Activated T-helper 1 cell treated with anti-CD3 and anti-CD28 coated beads, Interleukin-12 subunit alpha, Interleukin-12 subunit beta, Interleukin-2, Interleukin-4 antibody, amounts not matched to agents 30 ng/mL and 10 ng/mL and 1 ng/mL, durations not matched to agents 14 hours and 24 hours and 36 hours (primary cell): ENCODE measurements at regions of chr2 and their contacts with region 1.

Region 1: GRCh38 chr2:11829947-11830707 is 83.7 kb downstream of the LPIN1 start:
- DNase-seq: peak; percentile 59
- H3K4me3 Mint-ChIP-seq: peak overlapping the region; percentile 76
- H3K27ac Mint-ChIP-seq: peak overlapping the region; percentile 75
- H3K4me1 Mint-ChIP-seq: peaks cover 44% of the 10 kb centered on the region
- H3K27me3 Mint-ChIP-seq: peaks cover 37% of the 10 kb centered on the region

Region 2: GRCh38 chr2:11753886-11754699 is 76.0 kb before region 1 on chr2:
- intact Hi-C with region 1: loop called (anchors 1 kb)
- DNase-seq: peak; percentile 57
- H3K4me3 Mint-ChIP-seq: peak overlapping the region; percentile 69
- H3K27ac Mint-ChIP-seq: peak overlapping the region; percentile 82
- H3K4me1 Mint-ChIP-seq: peaks cover 85% of the 10 kb centered on the region
- H3K27me3 Mint-ChIP-seq: no peaks in the 10 kb centered on the region

Region 3: GRCh38 chr2:11807156-11807555 is 23.0 kb before region 1 on chr2:
- intact Hi-C with region 1: no loop called
- DNase-seq: no peak
- H3K4me3 Mint-ChIP-seq: no peak overlapping the region
- H3K27ac Mint-ChIP-seq: no peak overlapping the region
- H3K4me1 Mint-ChIP-seq: peaks cover 6% of the 10 kb centered on the region
- H3K27me3 Mint-ChIP-seq: no peaks in the 10 kb centered on the region

Region 4: DNA sequence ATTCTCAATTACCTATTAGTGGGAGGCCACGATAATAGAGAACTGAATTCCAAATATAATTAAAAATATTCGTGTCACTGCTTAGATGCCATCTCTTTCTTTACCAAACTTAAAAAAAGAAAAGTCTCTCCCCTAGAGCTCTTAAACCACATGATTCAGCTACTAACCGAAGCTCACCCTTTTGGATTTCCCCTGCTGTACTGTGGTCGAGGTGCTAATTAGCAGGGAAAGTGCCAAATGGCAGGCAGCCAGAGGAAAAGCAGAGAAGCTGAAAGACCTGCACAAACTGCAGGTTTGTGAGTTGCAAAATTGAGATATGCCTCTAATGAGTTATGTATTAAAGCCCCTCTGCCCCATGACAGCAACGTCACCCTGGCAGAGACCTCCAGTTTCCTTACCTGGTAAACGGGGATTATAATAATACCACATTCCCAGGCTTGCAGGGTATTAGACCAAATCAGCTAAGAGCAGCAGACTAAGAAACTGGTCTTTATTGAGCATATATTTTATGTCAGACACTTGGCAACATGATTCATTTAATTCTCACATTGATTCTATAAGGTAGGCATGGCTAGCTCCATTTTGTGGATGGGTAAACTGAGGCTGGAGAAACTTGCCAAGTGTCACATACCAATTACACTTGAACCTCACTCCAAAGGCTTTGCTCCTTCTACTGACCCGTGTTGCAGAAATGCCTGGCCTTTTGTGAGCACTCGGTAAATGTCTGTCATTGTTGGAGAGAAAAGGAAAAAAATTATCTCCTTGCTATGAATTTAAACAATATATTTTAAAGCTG is 176.0 kb after region 1 on chr2:
- intact Hi-C with region 1: loop called (anchors 1 kb)
- DNase-seq: peak; percentile 45
- H3K4me3 Mint-ChIP-seq: no peak overlapping the region
- H3K27ac Mint-ChIP-seq: no peak overlapping the region
- H3K4me1 Mint-ChIP-seq: peaks cover 7% of the 10 kb centered on the region
- H3K27me3 Mint-ChIP-seq: peaks cover 58% of the 10 kb centered on the region

Region 5: DNA sequence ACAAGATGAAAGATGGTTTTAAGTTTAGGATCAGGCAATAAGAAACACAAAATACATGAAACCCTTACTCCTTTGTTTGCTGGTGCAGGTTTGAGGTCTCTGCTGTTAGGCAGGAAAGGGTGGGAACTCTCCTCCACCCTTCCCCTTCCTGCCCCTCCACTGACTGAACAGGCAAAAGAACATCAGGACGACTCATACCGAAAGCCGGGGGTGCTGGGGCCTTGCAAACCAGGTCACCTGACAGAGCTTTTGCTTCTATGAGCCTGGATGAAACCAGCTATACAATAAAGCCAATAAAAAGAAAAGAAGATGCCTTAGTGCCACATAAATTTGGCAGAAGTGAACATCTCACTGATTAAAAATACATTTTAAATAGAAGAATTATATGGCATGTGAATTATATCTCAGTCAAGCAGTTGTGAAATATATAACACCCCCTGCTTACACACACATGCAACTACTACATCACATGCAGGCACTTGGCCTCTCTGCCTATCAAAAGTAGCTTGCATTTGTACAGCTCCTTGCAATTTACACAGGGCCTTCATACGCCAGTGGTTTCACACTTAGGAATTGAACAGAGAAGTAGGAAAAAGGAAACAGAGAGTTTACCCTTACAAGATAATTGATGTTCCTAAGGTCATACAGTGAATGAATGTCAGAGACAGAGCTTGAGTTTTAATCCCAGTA is 671.5 kb after region 1 on chr2:
- intact Hi-C with region 1: loop called (anchors 1 kb)
- DNase-seq: peak; percentile 79
- H3K4me3 Mint-ChIP-seq: peak overlapping the region; percentile 34
- H3K27ac Mint-ChIP-seq: peak overlapping the region; percentile 89
- H3K4me1 Mint-ChIP-seq: peaks cover 92% of the 10 kb centered on the region
- H3K27me3 Mint-ChIP-seq: no peaks in the 10 kb centered on the region

Region 6: GRCh38 chr2:12931186-12931844 is 1101.2 kb after region 1 on chr2:
- intact Hi-C with region 1: loop called (anchors 5 kb)
- DNase-seq: no peak
- H3K4me3 Mint-ChIP-seq: no peak overlapping the region
- H3K27ac Mint-ChIP-seq: no peak overlapping the region
- H3K4me1 Mint-ChIP-seq: peaks cover 10% of the 10 kb centered on the region
- H3K27me3 Mint-ChIP-seq: peaks cover 41% of the 10 kb centered on the region